GM10248 (cell line): ENCODE measurements at regions of chr11 and their contacts with region 1.

Region 1: GRCh38 chr11:61446211-61446651 is 16.3 kb downstream of the SDHAF2 start:
- DNase-seq: peak; percentile 77
- CTCF ChIP-seq: peak; percentile 88

Region 2: DNA sequence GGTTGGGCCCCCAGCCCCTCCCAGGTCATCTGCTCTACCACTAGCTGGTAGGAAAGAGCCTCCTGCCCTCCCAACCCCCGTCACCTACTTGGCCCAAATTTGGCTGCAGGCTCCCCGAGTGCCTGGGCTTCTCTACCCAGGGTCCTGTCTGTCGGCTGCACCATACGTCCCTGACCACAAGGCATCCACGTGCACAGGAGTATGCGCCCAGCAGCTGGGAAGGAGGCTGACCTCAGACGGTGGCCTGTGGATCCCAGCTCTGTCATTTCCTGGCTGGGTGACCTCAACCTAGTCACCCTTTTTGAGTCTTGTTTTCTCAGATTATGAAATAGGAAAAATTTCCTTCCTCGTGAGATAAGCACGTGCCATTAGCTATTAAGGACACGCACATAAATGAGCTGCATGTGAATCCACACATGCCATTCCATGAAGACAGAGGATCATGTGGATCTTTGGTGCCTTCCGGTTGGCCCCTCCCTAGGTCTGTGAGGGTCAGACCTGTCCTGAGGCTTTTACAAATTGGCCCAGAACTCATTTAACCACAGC is 98.2 kb before region 1 on chr11:
- CTCF ChIA-PET with region 1: no interaction called
- POLR2A ChIA-PET with region 1: no interaction called
- DNase-seq: no peak
- CTCF ChIP-seq: no peak

Region 3: DNA sequence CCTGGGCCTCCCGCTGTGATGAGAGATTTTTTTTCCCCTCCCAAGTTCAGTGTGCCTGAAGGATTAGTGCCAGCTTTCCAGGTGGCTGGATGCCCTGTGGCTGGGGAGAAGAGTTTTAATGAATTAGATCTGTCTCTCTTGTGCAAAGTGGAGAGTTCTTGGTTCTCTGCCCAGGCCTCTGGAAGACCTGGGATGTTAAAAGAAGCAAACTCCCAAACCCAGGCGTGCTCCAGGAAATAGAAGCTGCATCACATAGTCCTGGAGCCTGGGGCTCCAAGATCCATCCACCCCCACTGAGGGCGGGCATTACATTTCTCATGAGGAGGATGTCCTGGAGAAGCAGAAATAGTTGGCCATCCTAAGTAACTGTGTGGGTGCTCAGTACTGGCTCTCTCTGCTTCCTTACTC is 14.2 kb after region 1 on chr11:
- CTCF ChIA-PET with region 1: interaction called, 41 read pairs
- POLR2A ChIA-PET with region 1: no interaction called
- DNase-seq: no peak
- CTCF ChIP-seq: no peak

Region 4: GRCh38 chr11:61477727-61478148 is 31.5 kb after region 1 on chr11:
- CTCF ChIA-PET with region 1: interaction called, 27 read pairs
- POLR2A ChIA-PET with region 1: no interaction called
- DNase-seq: peak; percentile 82
- CTCF ChIP-seq: peak; percentile 89

Region 5: GRCh38 chr11:61532139-61533038 is 86.2 kb after region 1 on chr11:
- CTCF ChIA-PET with region 1: interaction called, 11 read pairs
- POLR2A ChIA-PET with region 1: no interaction called
- DNase-seq: peak; percentile 85
- CTCF ChIP-seq: peak; percentile 87

Region 6: GRCh38 chr11:61627567-61628445 is 181.6 kb after region 1 on chr11:
- CTCF ChIA-PET with region 1: interaction called, 20 read pairs
- POLR2A ChIA-PET with region 1: no interaction called
- DNase-seq: peak; percentile 65
- CTCF ChIP-seq: peak; percentile 68

Region 7: DNA sequence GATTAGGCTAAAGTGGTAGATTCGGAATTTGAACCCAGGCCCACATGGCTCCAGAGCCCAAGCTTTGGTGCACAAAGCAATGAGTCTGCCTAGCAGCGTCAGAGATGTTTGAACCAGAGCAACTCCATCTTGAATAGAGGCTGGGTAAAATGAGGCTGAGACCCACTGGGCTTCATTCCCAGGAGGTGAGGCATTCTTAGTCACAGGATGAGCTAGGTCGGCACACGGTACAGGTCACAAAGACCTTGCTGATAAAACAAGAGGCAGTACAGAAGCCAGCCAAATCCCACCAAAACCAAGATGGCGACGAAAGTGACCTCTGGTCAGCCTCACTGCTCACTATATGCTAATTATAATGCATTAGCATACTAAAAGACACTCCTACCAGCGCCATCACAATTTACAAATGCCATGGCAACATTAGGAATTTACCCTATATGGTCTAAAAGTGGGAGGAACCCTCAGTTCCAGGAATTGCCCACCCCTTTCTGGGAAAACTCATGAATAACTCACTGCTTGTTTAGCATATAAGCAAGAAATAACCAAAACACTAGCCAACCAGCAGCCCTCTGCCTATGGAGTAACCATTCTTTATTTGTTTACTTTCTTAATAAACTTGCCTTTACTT is 193.7 kb after region 1 on chr11:
- CTCF ChIA-PET with region 1: interaction called, 36 read pairs
- POLR2A ChIA-PET with region 1: no interaction called
- DNase-seq: no peak
- CTCF ChIP-seq: no peak